ENCODE measurements at regions of chr9 and their contacts with region 1.

Region 1: GRCh38 chr9:124617471-124618141 is 110.4 kb upstream of the NR5A1 start:
- H3K4me3 ChIP-seq: no peak overlapping the region
- H3K27ac ChIP-seq: no peak overlapping the region
- H3K4me1 ChIP-seq: peaks cover 10% of the 10 kb centered on the region
- CTCF ChIP-seq: peak; percentile 68

Region 2: DNA sequence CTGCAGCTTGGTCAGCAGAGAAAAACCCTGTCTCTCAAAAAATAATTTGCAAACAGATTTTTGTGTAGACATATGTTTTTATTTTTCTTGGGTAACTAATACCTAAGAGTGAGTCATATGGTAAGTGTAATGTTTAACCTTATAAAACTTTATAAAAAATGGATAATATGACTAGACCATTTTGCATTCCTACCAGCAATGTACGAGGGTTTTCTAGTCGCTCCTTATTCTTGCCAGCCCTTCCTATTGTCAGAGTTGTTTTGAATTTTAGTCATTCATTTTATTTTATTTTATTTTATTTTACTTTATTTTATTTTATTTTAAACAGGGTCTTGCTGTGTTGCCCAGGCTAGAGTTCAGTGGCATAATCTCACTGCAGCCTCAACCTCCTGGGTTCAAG is 1639.0 kb before region 1 on chr9:
- CTCF ChIA-PET with region 1: no interaction called
- POLR2A ChIA-PET with region 1: no interaction called
- H3K4me3 ChIP-seq: no peak overlapping the region
- H3K27ac ChIP-seq: no peak overlapping the region
- H3K4me1 ChIP-seq: no peaks in the 10 kb centered on the region
- CTCF ChIP-seq: no peak

Region 3: DNA sequence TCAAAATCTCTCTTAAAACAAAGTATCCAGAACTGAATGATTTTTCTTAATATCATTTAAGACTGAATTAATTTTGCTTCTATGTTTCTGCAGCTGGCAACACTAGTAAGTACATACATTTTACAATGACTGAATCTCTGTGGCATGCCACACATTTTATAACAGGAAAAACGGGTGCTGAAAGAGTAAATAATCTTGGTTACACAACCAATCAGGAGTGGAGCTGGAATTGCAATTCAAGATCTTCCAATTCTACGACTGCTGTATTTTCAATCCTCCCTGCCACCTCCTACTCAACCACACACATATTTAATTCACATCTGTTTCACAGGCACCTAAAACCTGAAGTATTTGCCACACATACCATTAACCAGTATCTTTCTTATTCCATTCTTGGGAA is 57.7 kb before region 1 on chr9:
- CTCF ChIA-PET with region 1: interaction called, 10 read pairs
- POLR2A ChIA-PET with region 1: no interaction called
- H3K4me3 ChIP-seq: no peak overlapping the region
- H3K27ac ChIP-seq: no peak overlapping the region
- H3K4me1 ChIP-seq: 0 out of 2 replicates have a peak, but pooled peaks cover 3% of the 10 kb centered on the region
- CTCF ChIP-seq: no peak

Region 4: DNA sequence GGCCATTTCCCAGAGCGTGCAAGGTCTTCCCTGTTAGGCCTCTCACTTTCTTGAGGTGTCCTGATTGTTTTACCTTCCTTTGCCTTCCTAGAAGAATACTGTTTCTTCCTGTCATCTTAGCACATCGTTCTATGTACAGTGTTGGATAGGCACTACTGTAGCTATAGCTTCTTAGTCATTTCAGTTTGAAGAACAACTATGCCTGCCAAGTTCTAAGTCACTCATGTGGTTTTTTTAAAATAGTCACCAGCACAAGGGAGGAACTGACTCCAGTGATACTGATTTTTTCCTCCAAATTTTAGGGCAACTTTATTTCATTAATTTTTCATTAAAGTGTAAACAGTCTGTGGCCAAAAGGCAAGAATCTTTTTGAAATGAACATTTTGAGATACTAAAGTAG is 12.0 kb after region 1 on chr9:
- CTCF ChIA-PET with region 1: interaction called, 16 read pairs
- POLR2A ChIA-PET with region 1: interaction called, 5 read pairs
- H3K4me3 ChIP-seq: no peak overlapping the region
- H3K27ac ChIP-seq: no peak overlapping the region
- H3K4me1 ChIP-seq: no peaks in the 10 kb centered on the region
- CTCF ChIP-seq: no peak

Region 5: GRCh38 chr9:124658165-124659017 is 40.8 kb after region 1 on chr9:
- CTCF ChIA-PET with region 1: interaction called, 65 read pairs
- POLR2A ChIA-PET with region 1: interaction called, 16 read pairs
- H3K4me3 ChIP-seq: peak overlapping the region; percentile 57
- H3K27ac ChIP-seq: peak overlapping the region; percentile 72
- H3K4me1 ChIP-seq: peaks cover 6% of the 10 kb centered on the region; the same call in 1 of the 2 replicates
- CTCF ChIP-seq: no peak

Region 6: DNA sequence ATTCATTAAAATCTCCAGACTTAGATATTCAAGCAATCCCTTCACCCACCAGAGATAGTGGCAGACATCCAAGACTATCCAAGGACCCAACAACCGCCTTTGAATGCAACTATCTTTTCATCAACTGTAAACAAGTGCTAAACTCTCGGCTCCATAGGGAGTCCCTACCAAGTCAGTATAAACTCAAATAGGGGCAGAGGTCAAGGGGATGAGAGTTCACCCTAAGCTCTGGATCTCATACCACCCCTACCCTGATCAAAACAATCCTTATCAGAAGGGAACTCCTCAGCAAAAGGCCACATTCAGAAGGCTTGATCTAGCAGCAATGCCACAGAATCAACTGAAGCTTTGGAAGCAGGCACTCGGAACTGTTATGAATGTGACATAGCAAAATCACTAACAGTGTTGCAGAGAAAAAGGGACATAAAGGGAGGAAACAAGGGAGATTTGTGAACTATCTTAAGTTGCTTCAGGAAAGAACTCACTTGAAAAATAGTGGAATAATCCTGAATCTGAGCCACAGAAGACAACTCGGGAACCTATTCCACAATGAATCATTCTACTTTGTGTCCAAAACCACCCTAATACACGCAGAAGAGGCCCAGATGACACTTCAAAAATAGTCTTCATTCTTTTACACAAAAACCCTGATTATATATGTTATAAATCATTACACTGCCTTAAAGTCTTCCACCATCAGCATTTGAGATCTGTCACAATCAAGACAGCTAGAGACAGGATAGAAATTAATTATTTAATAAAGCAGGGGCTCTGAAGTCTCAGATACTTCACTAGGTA is 103.7 kb after region 1 on chr9:
- CTCF ChIA-PET with region 1: interaction called, 236 read pairs
- POLR2A ChIA-PET with region 1: no interaction called
- H3K4me3 ChIP-seq: no peak overlapping the region
- H3K27ac ChIP-seq: peak overlapping the region; percentile 29
- H3K4me1 ChIP-seq: peaks cover 19% of the 10 kb centered on the region
- CTCF ChIP-seq: no peak

Region 7: GRCh38 chr9:124771021-124771866 is 153.6 kb after region 1 on chr9 and contains the start of gene NR6A1:
- CTCF ChIA-PET with region 1: interaction called, 43 read pairs
- POLR2A ChIA-PET with region 1: no interaction called
- H3K4me3 ChIP-seq: peak within 1 kb of the TSS; percentile 96
- H3K27ac ChIP-seq: peak within 1 kb of the TSS; percentile 91
- H3K4me1 ChIP-seq: peaks cover 16% of the 10 kb centered on the region; the same call in 1 of the 2 replicates
- CTCF ChIP-seq: peak; percentile 51; the same call in 1 of the 2 replicates

Measured in HEK293 (cell line).